ENCODE measurements at regions of chr14 and their contacts with region 1.

Region 1: GRCh38 chr14:21269252-21270046 is at the start of gene HNRNPC:
- DNase-seq: peak; percentile 100
- H3K4me3 Mint-ChIP-seq: peak within 1 kb of the TSS; percentile 100
- H3K27ac Mint-ChIP-seq: peak within 1 kb of the TSS; percentile 100
- H3K4me1 Mint-ChIP-seq: peaks cover 24% of the 10 kb centered on the region
- H3K27me3 Mint-ChIP-seq: no peaks in the 10 kb centered on the region
- total RNA-seq, gene HNRNPC: 1,063 to 1,070 TPM

Region 2: DNA sequence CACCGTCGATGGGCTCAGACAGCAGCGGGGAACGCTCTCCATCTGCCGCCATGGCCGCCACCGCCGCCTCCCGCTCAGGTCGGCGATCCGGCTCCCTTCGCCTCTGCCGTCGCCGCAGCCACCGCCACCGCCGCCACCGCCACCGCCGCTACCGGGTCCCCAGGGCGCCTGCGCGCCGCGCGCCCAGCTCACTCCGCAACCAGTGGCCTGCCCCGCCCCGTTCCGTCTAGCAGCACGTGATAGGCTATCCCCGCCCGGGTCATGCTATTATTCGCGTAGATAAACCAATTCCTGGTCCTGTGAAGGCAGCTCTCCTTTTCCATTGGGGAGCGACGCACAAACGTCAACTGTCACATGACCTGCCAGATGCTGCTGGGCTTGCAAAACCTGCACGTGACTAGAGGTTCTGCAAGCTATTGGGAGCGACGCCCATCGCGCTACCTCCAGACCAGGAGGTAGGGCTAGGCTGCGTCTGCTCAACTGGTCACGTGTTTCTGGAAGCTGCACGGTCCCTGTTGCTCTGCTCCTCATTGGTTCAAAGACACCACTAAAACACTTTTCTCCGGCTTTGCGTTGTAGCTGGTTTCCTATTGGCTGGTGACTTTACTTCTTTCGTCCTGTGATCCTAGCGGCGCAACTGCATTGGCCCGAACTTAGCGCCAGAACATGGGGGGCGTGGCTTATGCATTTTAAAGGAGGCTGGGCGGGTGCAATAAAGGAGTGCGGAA is 808.0 kb before region 1 on chr14 and contains the start of gene PIP4P1:
- CTCF ChIA-PET with region 1: no interaction called
- POLR2A ChIA-PET with region 1: no interaction called
- intact Hi-C with region 1: loop called (anchors 5 kb)
- DNase-seq: peak; percentile 99
- H3K4me3 Mint-ChIP-seq: peak within 1 kb of the TSS; percentile 91
- H3K27ac Mint-ChIP-seq: peak within 1 kb of the TSS; percentile 93
- H3K4me1 Mint-ChIP-seq: peaks cover 33% of the 10 kb centered on the region
- H3K27me3 Mint-ChIP-seq: no peaks in the 10 kb centered on the region
- total RNA-seq, gene PIP4P1: 31.1 to 35.2 TPM

Region 3: DNA sequence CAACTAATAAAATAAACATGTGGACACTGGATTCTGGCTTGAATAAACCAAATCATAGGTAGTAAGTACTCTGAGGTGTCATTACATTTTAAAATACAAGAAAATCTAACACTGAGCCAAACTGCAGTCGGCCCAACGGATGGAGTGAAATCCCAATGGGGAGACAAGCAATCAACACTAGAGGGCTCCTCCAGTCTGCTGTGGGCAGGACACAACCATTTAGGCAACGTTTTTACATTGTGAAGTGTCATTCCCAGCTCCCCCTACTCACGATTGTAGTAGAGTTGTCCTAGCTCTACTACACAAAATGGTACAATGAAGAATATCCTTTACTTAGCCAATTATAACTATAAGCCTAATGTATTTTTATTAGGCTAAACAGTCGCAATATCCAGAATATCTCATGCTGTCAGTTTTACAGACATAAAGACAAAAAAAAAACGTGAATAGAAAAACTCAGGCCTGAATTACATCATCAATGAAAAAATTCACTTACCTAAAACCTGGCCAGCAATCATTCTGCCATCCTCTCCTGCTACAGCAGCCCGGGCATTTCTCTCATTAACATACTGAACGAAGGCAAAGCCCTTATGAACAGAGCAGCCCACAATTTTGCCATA is 35.9 kb before region 1 on chr14:
- CTCF ChIA-PET with region 1: interaction called, 4 read pairs
- POLR2A ChIA-PET with region 1: interaction called, 15 read pairs
- intact Hi-C with region 1: loop called (anchors 1 kb)
- DNase-seq: peak; percentile 33
- H3K4me3 Mint-ChIP-seq: peak overlapping the region; percentile 46
- H3K27ac Mint-ChIP-seq: peak overlapping the region; percentile 79
- H3K4me1 Mint-ChIP-seq: peaks cover 89% of the 10 kb centered on the region
- H3K27me3 Mint-ChIP-seq: no peaks in the 10 kb centered on the region

Region 4: GRCh38 chr14:21308479-21309237 is 39.2 kb after region 1 on chr14:
- CTCF ChIA-PET with region 1: no interaction called
- POLR2A ChIA-PET with region 1: interaction called, 3 read pairs
- intact Hi-C with region 1: loop called (anchors 1 kb)
- DNase-seq: peak; percentile 91
- H3K4me3 Mint-ChIP-seq: peak overlapping the region; percentile 70
- H3K27ac Mint-ChIP-seq: peak overlapping the region; percentile 80
- H3K4me1 Mint-ChIP-seq: peaks cover 18% of the 10 kb centered on the region
- H3K27me3 Mint-ChIP-seq: no peaks in the 10 kb centered on the region

Region 5: DNA sequence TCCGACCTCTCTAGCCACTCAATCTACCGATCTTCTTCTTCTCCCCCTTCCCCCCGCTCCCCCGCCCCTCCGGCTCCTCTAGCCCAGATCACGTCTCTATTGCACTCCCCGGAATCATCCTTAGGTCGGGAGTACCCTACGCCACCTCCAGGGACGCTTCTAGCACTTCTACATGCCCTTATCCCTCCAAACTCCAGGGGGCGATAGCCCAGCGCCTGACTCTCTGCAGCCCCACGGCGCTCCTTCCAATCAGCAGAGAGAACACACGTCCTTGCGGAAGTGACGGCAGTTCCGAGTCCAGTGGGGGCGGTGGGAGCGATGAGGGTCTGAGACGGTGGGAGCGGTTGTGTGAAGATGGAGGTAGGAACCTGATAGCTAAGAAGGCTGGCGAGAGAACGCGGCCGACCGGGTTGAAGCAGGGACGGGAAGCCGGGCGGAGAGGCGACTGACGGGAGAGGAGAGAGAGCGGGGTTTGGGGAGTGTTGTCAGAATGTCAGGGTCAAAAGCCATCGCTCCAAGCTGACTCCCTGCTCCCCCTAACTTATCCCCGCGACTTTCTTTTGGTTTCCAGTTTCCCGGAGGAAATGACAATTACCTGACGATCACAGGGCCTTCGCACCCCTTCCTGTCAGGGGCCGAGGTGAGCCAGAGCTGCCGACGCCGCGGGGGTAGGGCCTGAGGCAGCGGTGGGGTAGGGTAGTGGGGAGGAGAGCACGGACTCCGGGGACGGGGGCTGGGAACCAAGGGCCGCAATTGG is 207.7 kb after region 1 on chr14 and contains the starts of genes RAB2B and TOX4:
- CTCF ChIA-PET with region 1: no interaction called
- POLR2A ChIA-PET with region 1: interaction called, 7 read pairs
- intact Hi-C with region 1: loop called (anchors 1 kb)
- DNase-seq: peak; percentile 97
- H3K4me3 Mint-ChIP-seq: peak within 1 kb of the TSS; percentile 99
- H3K27ac Mint-ChIP-seq: peak within 1 kb of the TSS; percentile 95
- H3K4me1 Mint-ChIP-seq: peaks cover 31% of the 10 kb centered on the region
- H3K27me3 Mint-ChIP-seq: no peaks in the 10 kb centered on the region
- total RNA-seq, gene RAB2B: 21.2 to 23.6 TPM
- total RNA-seq, gene TOX4: 66.1 to 67.5 TPM

Region 6: GRCh38 chr14:21987937-21988336 is 718.5 kb after region 1 on chr14:
- CTCF ChIA-PET with region 1: no interaction called
- POLR2A ChIA-PET with region 1: no interaction called
- intact Hi-C with region 1: loop called (anchors 10 kb)
- DNase-seq: peak; percentile 25
- H3K4me3 Mint-ChIP-seq: no peak overlapping the region
- H3K27ac Mint-ChIP-seq: peak overlapping the region; percentile 92
- H3K4me1 Mint-ChIP-seq: peaks cover 11% of the 10 kb centered on the region
- H3K27me3 Mint-ChIP-seq: no peaks in the 10 kb centered on the region

Measured in activated CD4-positive, alpha-beta memory T cell treated with anti-CD3 and anti-CD28 coated beads for 36 hours (primary cell).